Activated B cell treated with CpG ODN at 0.5 μM for 24 hours (primary cell): ENCODE measurements at regions of chr5 and their contacts with region 1.

Region 1: GRCh38 chr5:115333164-115333563 is 36.7 kb upstream of the CCDC112 start:
- DNase-seq: no peak
- ATAC-seq: peak; percentile 29
- H3K4me3 Mint-ChIP-seq: no peak overlapping the region
- H3K27ac Mint-ChIP-seq: no peak overlapping the region
- H3K4me1 Mint-ChIP-seq: peaks cover 47% of the 10 kb centered on the region
- H3K27me3 Mint-ChIP-seq: peaks cover 2% of the 10 kb centered on the region
- CTCF ChIP-seq: no peak

Region 2: GRCh38 chr5:115321309-115321708 is 11.9 kb before region 1 on chr5:
- CTCF ChIA-PET with region 1: no interaction called
- POLR2A ChIA-PET with region 1: no interaction called
- intact Hi-C with region 1: no loop called
- DNase-seq: no peak
- ATAC-seq: no peak
- H3K4me3 Mint-ChIP-seq: no peak overlapping the region
- H3K27ac Mint-ChIP-seq: no peak overlapping the region
- H3K4me1 Mint-ChIP-seq: no peaks in the 10 kb centered on the region
- H3K27me3 Mint-ChIP-seq: peaks cover 4% of the 10 kb centered on the region
- CTCF ChIP-seq: no peak

Region 3: GRCh38 chr5:115366223-115366622 is 33.1 kb after region 1 on chr5:
- CTCF ChIA-PET with region 1: no interaction called
- POLR2A ChIA-PET with region 1: interaction called, 3 read pairs
- intact Hi-C with region 1: loop called (anchors 1 kb)
- DNase-seq: no peak
- ATAC-seq: no peak
- H3K4me3 Mint-ChIP-seq: no peak overlapping the region
- H3K27ac Mint-ChIP-seq: no peak overlapping the region
- H3K4me1 Mint-ChIP-seq: no peaks in the 10 kb centered on the region
- H3K27me3 Mint-ChIP-seq: no peaks in the 10 kb centered on the region
- CTCF ChIP-seq: no peak

Region 4: DNA sequence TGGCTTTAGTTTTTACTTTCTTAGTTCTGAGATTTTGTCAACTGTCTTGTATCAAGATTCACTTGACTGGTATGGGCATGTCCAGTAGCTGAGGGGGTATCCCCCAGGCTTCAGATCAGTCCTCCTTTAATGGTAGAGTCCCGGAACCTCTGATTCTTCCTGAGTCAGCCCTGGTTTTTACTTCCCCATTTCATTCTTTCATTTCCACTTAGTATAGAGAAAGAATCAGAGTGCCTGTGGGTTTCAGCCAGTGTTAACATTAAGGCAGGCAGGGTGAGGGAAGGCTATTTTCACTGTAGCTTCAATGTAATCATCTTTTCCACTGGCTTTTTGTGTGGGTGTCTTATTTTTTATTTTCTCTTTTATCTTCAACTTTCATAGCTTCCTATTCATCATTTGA is 743.3 kb after region 1 on chr5:
- CTCF ChIA-PET with region 1: no interaction called
- POLR2A ChIA-PET with region 1: no interaction called
- intact Hi-C with region 1: loop called (anchors 5 kb)
- DNase-seq: no peak
- ATAC-seq: peak; percentile 95
- H3K4me3 Mint-ChIP-seq: peak overlapping the region; percentile 76
- H3K27ac Mint-ChIP-seq: peak overlapping the region; percentile 88
- H3K4me1 Mint-ChIP-seq: peaks cover 29% of the 10 kb centered on the region
- H3K27me3 Mint-ChIP-seq: no peaks in the 10 kb centered on the region
- CTCF ChIP-seq: no peak